ENCODE measurements at regions of chr16 and their contacts with region 1.

Region 1: GRCh38 chr16:4682616-4683254 is 10.6 kb upstream of the NUDT16L1 start:
- DNase-seq: peak in 1 of 2 donors; percentile 18
- ATAC-seq: no peak
- H3K4me3 ChIP-seq: no peak overlapping the region
- H3K27ac ChIP-seq: peak overlapping the region in 1 of 10 donors; percentile 11
- H3K4me1 ChIP-seq: peaks cover under 1 to 52% (median 26%) of the 10 kb centered on the region in 9 donors
- H3K27me3 ChIP-seq: no peaks in the 10 kb centered on the region
- CTCF ChIP-seq: peak in 7 of 9 donors; percentile 11 to 50 (median 33)

Region 2: GRCh38 chr16:4307215-4308037 is 375.3 kb before region 1 on chr16:
- intact Hi-C with region 1: no loop called
- DNase-seq: peak; percentile 92 to 96
- ATAC-seq: peak; percentile 91 to 97 (median 95)
- H3K4me3 ChIP-seq: peak overlapping the region; percentile 25 to 66 (median 54)
- H3K27ac ChIP-seq: peak overlapping the region; percentile 29 to 94 (median 87)
- H3K4me1 ChIP-seq: peaks cover 2 to 30% (median 19%) of the 10 kb centered on the region in 9 donors
- H3K27me3 ChIP-seq: no peaks in the 10 kb centered on the region
- CTCF ChIP-seq: peak in 4 of 9 donors; percentile 6 to 35 (median 17)

Region 3: DNA sequence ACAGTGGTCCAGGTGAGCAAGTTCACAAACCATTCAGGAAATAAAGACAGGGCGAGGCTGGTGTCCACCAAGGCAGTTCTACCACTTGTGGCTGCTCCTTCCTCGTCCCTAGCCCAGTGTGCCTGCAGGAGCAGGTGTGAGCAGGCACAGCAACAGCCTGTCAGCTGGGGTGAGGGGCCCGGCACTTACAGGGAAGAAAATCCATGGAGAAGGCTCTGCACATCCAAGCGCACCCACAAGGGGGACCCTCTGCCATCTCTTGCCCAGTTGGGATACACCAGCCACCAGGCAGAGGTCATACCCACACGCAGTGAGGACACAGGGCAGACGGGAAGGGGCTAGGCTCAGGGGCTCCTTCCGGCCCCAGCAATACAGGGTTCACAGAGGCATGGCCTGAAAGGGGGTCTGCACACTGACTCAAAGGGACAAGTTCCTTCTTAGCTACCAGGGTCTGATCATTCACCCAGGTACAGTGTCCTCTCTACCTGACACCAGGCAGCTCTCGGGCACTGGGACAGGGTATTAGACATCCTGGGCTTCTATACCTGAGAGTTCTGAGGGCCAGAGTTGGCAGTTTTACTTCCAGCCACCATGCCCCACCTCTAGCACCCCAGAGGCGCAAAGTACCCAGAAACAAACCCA is 171.2 kb before region 1 on chr16:
- intact Hi-C with region 1: loop called in 1 of 10 experiments (anchors 10 kb)
- DNase-seq: peak; percentile 45 to 54
- ATAC-seq: peak; percentile 45 to 66 (median 58)
- H3K4me3 ChIP-seq: no peak overlapping the region
- H3K27ac ChIP-seq: peak overlapping the region; percentile 34 to 87 (median 56)
- H3K4me1 ChIP-seq: peaks cover 26 to 64% (median 55%) of the 10 kb centered on the region in 9 donors
- H3K27me3 ChIP-seq: no peaks in the 10 kb centered on the region
- CTCF ChIP-seq: peak; percentile 17 to 64 (median 58)

Region 4: GRCh38 chr16:4574919-4575705 is 107.6 kb before region 1 on chr16:
- intact Hi-C with region 1: no loop called
- DNase-seq: no peak
- ATAC-seq: peak in 2 of 8 donors; percentile 21 to 32
- H3K4me3 ChIP-seq: no peak overlapping the region
- H3K27ac ChIP-seq: no peak overlapping the region
- H3K4me1 ChIP-seq: no peaks in the 10 kb centered on the region
- H3K27me3 ChIP-seq: no peaks in the 10 kb centered on the region
- CTCF ChIP-seq: no peak

Region 5: DNA sequence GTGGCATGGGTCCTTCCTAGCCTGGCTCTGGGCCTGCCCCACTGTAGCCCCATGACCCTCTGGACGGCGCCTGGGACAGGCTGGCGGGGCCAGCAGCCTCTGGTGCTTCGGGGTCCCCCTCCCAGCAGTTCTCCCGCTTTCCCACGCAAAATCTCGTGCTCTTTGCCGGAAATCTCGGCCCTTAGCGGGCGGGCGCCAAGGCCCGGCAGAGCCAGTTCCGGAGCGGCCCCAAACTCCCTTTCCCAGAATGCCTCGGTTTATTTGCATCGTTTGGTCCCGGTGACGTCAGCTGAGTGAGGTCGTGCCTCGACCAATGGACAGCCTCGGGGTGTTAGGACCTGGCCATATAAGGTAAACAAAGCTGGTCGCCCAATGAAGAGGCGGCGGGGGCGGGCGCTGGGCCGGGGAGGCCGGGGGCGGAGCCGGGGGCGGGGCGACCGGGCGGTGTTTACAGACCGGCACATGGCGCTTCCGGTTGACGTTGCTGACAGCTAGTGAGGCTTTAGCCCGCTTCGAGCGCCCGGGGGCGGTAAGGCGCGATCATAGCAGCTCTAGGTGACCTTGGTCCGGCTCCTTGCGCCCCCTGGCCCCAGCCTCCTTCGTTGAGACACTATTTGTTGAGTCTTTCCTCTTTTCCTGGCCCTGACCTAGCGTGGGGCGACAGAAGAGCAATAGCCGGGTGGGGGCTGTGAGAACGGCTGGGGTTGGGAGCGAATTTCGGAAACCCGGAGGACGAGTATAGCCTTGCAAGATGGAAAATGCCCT is 66.5 kb before region 1 on chr16:
- intact Hi-C with region 1: loop called in 1 of 10 experiments (anchors 2 kb)
- DNase-seq: peak; percentile 99 to 100
- ATAC-seq: peak; percentile 88 to 94 (median 91)
- H3K4me3 ChIP-seq: peak overlapping the region; percentile 46 to 90 (median 73)
- H3K27ac ChIP-seq: peak overlapping the region; percentile 91 to 100 (median 96)
- H3K4me1 ChIP-seq: peaks cover 13 to 66% (median 47%) of the 10 kb centered on the region in 9 donors
- H3K27me3 ChIP-seq: no peaks in the 10 kb centered on the region
- CTCF ChIP-seq: peak in 8 of 9 donors; percentile 13 to 69 (median 47)

Region 6: DNA sequence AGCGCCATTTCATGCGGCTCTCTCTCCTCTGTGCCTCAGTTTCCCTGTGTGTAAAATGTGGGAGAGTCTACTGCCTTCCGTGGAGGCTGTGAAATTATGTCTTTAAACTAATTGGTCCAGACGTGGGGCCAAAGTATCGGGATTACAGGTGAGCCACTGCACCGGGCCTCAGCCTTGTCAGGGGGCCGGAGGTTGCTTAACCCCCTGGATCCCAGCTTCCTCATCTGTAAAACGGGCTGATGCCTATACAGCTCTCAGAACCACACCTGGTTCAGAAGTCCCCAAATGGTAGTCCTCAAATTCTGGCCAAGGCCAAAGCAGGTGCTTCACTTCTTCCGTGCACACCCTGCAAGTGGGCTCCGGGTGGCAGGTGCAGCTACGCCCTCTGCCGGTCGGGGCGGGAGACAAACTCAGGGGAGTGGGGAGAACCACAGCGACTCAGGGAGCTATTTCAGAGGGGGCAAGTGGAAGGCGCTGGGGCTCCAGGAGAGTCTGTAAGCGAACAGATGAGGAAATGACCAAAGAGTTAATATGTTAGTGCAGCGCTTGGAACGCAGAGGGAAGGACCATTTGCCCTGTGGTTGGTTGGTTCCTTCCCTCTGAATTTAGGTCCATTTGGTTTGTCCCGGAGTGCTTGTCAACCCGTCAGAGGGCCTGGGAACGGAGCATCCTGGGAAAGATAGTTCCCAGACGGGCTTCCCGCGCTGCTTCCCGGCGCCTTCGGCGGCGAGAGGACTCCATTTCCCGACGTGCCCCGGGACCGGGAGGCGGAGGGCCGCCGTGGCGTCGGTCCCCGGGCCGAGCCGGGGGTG is 58.5 kb before region 1 on chr16 and contains the start of gene MGRN1:
- intact Hi-C with region 1: loop called in 1 of 10 experiments (anchors 5 kb)
- DNase-seq: peak; percentile 93 to 96
- ATAC-seq: peak; percentile 96 to 99 (median 98)
- H3K4me3 ChIP-seq: peak within 1 kb of the TSS; percentile 83 to 100 (median 93)
- H3K27ac ChIP-seq: peak within 1 kb of the TSS; percentile 68 to 99 (median 96)
- H3K4me1 ChIP-seq: peaks cover 9 to 28% (median 22%) of the 10 kb centered on the region in 9 donors
- H3K27me3 ChIP-seq: no peaks in the 10 kb centered on the region
- CTCF ChIP-seq: peak; percentile 86 to 99 (median 93)
- total RNA-seq, gene MGRN1: 32.2 to 73.5 (median 42.9) TPM

Region 7: DNA sequence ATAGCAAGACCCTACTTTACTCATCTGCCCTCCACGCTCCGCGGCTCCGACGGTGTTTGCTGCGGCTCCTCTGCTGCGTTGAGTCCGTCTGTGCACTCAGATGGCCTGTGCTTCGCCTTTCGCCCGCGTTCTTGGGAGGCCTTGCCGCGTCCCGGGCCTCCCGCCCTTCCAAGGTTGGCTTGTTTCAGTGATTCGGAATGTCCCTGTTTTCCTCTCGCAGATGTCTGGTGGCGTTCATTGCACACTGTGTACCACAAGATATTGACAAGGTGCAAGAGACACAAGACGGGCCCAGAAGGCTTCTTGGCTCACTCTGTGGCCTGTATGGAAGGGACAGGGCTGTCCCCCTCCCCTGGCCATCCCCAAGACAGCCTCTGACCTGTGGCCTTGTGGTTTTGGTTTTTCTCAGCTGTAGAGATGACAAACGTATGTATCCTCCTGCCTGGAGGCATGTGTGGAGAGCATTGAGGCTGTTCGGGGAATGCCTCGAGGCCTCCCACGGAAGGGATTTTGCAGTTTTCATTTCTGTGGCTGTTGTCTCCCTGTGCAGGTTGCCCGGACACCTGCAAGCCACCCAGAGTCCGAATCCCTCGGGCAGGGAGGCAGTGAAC is 42.7 kb before region 1 on chr16:
- intact Hi-C with region 1: loop called in 1 of 10 experiments (anchors 5 kb)
- DNase-seq: no peak
- ATAC-seq: peak in 3 of 8 donors; percentile 36 to 77 (median 46)
- H3K4me3 ChIP-seq: no peak overlapping the region
- H3K27ac ChIP-seq: peak overlapping the region in 4 of 10 donors; percentile 29 to 57 (median 41)
- H3K4me1 ChIP-seq: peaks cover 0 to 39% (median 14%) of the 10 kb centered on the region in 9 donors
- H3K27me3 ChIP-seq: no peaks in the 10 kb centered on the region
- CTCF ChIP-seq: no peak

Region 8: GRCh38 chr16:4846891-4847773 is 164.4 kb after region 1 on chr16 and contains the starts of genes GLYR1 and UBN1:
- intact Hi-C with region 1: no loop called
- DNase-seq: peak; percentile 99 to 100
- ATAC-seq: peak; percentile 97 to 99 (median 98)
- H3K4me3 ChIP-seq: peak within 1 kb of the TSS; percentile 80 to 100 (median 96)
- H3K27ac ChIP-seq: peak within 1 kb of the TSS; percentile 85 to 99 (median 96)
- H3K4me1 ChIP-seq: peaks cover 17 to 65% (median 56%) of the 10 kb centered on the region in 9 donors
- H3K27me3 ChIP-seq: no peaks in the 10 kb centered on the region
- CTCF ChIP-seq: no peak
- total RNA-seq, gene GLYR1: 70.9 to 105 (median 75.1) TPM
- total RNA-seq, gene UBN1: 28.1 to 56.9 (median 31.1) TPM

Measured in heart right ventricle (tissue), 16 donors.